K562 (cell line): ENCODE measurements at regions of chr9 and their contacts with region 1.

Region 1: DNA sequence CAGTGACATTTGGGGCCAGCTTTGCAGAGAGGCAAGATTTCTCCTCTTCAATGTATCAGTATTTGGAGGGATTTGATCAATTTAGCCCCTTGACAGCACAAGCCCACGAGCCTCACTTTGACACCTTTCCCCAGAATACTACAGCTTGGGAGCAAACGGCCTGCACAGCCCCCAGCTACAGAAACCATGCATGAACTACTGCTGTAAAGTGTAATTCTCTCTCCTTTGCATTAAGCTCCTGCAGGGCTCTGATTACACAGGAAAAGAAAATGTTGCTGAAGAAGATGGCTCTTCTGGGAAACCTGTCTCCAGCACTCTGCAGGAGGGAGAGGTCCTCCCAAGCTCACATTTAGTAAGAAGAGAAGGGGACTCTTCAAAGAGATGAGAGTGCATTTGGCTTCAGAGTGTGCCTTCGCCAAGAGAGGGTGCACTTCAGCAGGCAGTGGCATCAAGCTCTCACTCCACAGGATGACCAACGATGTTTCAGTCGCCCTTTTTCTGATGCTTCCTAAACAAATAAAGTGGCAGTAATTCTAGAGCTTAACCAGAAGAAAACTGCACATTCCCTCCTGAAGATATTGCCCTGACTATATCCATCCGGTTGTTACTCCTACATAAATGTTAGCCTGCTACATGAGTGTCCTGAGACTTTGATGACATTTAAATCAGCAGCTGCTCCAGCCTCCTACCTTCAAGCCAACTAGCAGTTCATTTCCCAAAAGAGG is 272.2 kb downstream of the AUH start:
- DNase-seq: peak in 2 of 4 experiments; percentile 13 to 35
- ATAC-seq: peak; percentile 69; the same call in 2 of the 3 replicates
- H3K4me3 ChIP-seq: no peak overlapping the region
- H3K27ac ChIP-seq: no peak overlapping the region
- H3K4me1 ChIP-seq: no peaks in the 10 kb centered on the region; a peak in 1 of 5 replicates
- H3K27me3 ChIP-seq: peaks cover 0 to 8% of the 10 kb centered on the region in 2 experiments; a peak in 1 of 5 replicates
- CTCF ChIP-seq: peak; percentile 38 to 70 (median 40); a peak in 4 of 6 replicates
- EP300 ChIP-seq: no peak
- POLR2A ChIP-seq: no peak
- RAD21 ChIP-seq: peak; percentile 72 to 75

Region 2: GRCh38 chr9:90999425-91000397 is 89.9 kb before region 1 on chr9:
- CTCF ChIA-PET with region 1: no interaction called
- POLR2A ChIA-PET with region 1: no interaction called
- in situ Hi-C with region 1: no loop called
- intact Hi-C with region 1: no loop called
- DNase-seq: no peak
- ATAC-seq: no peak
- H3K4me3 ChIP-seq: no peak overlapping the region
- H3K27ac ChIP-seq: no peak overlapping the region
- H3K4me1 ChIP-seq: peaks cover 0 to 2% of the 10 kb centered on the region in 2 experiments; a peak in 3 of 5 replicates
- H3K27me3 ChIP-seq: peaks cover 0 to 4% of the 10 kb centered on the region in 2 experiments; a peak in 1 of 5 replicates
- CTCF ChIP-seq: no peak
- EP300 ChIP-seq: no peak
- POLR2A ChIP-seq: no peak
- RAD21 ChIP-seq: no peak

Region 3: GRCh38 chr9:91253488-91253887 is 163.9 kb after region 1 on chr9:
- CTCF ChIA-PET with region 1: no interaction called
- POLR2A ChIA-PET with region 1: no interaction called
- in situ Hi-C with region 1: no loop called
- intact Hi-C with region 1: loop called (anchors 1 kb)
- DNase-seq: peak; percentile 12 to 58 (median 35)
- ATAC-seq: peak; percentile 81
- H3K4me3 ChIP-seq: no peak overlapping the region
- H3K27ac ChIP-seq: no peak overlapping the region
- H3K4me1 ChIP-seq: no peaks in the 10 kb centered on the region
- H3K27me3 ChIP-seq: no peaks in the 10 kb centered on the region
- CTCF ChIP-seq: peak; percentile 10 to 58 (median 31); a peak in 3 of 6 replicates
- EP300 ChIP-seq: no peak
- POLR2A ChIP-seq: no peak
- RAD21 ChIP-seq: peak; percentile 68 to 75